Cardiac septum (tissue), 1 donor: ENCODE measurements at regions of chr14 and their contacts with region 1.

Region 1: DNA sequence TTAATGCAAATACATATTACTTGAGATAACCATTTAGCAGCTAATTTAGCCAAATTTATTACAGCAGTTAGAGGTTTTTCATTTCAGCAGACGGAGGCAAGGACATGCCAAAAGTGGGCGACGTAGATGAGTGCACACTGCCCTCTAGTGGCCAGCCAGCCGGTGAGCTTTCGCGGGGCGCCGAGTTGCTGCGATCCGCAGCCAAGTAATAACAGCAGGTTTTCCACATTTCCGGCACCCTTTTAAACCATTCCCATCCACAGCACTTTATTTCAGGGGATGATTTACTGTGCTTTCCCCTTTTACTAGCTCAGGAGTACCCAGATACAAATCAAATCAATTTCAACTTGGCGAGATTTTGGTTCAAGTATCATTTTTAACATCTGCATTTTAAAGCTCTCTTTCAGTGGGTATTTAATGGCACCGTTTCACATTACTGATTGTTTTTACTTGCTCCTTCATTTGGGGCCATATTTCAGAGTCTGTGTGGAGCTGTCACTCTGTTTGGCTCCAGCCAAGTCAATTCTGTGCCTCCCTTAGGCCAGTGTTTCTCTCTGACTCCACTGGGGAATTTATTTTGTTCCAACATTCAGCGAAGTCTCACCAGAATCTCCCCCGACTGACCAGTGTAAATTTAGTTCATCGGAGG is 158.0 kb downstream of the EGLN3 start:
- DNase-seq: peak; percentile 84

Region 2: GRCh38 chr14:33622496-33622895 is 170.3 kb before region 1 on chr14:
- intact Hi-C with region 1: no loop called
- DNase-seq: no peak

Region 3: DNA sequence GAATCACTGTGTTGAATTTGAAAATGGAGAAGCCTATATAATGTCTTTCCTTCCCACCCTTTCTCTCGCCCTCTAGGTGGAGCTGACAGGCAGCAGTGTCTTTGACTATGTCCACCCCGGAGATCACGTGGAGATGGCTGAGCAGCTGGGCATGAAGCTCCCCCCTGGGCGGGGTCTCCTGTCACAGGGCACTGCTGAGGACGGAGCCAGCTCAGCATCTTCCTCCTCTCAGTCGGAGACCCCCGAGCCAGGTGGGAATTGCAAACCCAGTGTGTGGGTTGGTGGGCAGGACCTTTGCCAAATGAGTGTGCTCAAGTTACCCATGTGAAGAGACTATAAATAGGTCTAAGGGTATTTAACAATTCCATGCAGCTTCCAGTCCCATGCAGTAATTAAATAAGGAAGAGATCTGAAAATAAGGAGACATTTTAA is 116.7 kb before region 1 on chr14:
- intact Hi-C with region 1: loop called (anchors 5 kb)
- DNase-seq: no peak